ENCODE measurements at regions of chr1 and their contacts with region 1.

Region 1: GRCh38 chr1:35436078-35436477 is 121.1 kb downstream of the KIAA0319L start:
- DNase-seq: no peak
- ATAC-seq: no peak
- H3K4me3 ChIP-seq: no peak overlapping the region
- H3K27ac ChIP-seq: no peak overlapping the region
- H3K4me1 ChIP-seq: no peaks in the 10 kb centered on the region
- H3K27me3 ChIP-seq: no peaks in the 10 kb centered on the region
- CTCF ChIP-seq: no peak
- POLR2A ChIP-seq: no peak

Region 2: GRCh38 chr1:35359995-35360394 is 76.1 kb before region 1 on chr1:
- in situ Hi-C with region 1: no loop called
- intact Hi-C with region 1: loop called (anchors 2 kb)
- DNase-seq: no peak
- ATAC-seq: no peak
- H3K4me3 ChIP-seq: no peak overlapping the region
- H3K27ac ChIP-seq: no peak overlapping the region
- H3K4me1 ChIP-seq: no peaks in the 10 kb centered on the region
- H3K27me3 ChIP-seq: no peaks in the 10 kb centered on the region
- CTCF ChIP-seq: no peak
- POLR2A ChIP-seq: no peak

Region 3: DNA sequence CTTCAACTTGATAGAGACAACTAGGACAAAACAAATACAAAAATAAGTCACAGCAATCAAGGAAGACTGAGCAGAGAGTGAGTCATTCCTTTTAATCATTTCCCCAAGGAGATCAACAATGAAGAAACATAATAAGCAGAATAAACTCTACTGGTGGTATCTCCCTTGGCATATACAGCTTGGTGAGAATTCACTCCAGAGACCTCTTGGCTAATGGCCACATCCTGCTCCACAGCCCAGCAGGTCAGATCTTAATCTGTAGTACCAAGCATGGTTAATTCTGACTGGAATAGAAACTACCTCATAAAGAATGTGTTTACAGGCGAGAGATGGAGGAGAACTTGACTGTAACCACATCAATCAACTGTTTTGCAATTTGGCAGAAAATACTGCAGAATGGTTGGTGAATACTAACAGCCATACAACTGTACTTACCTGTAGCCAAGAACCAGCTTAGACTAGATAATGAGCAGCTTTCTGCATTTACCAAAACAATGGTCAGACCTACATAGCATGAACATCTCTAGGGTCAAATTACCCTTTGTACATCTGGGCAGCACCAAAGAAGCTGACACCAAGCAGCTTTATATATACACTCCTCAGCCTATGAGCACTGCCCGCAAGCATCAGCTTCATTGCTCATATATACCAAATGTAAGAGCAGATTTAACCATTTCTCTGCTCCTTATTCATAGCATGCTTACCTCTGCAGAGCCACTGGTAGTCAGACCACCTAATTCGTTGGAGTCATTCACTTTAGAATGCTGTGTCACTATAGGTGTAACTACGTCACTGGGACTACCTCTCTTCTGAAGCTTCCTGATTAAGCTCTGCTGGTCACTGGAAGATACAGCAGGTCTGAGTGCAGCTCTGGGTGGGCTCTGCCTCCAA is 70.1 kb after region 1 on chr1:
- in situ Hi-C with region 1: no loop called
- intact Hi-C with region 1: no loop called
- DNase-seq: no peak
- ATAC-seq: peak; percentile 55 to 72
- H3K4me3 ChIP-seq: no peak overlapping the region
- H3K27ac ChIP-seq: peak overlapping the region in 3 of 4 donors; percentile 13 to 21 (median 20)
- H3K4me1 ChIP-seq: peaks cover 34 to 40% of the 10 kb centered on the region in 2 donors
- H3K27me3 ChIP-seq: no peaks in the 10 kb centered on the region
- CTCF ChIP-seq: no peak
- POLR2A ChIP-seq: no peak